ENCODE measurements at regions of chr9 and their contacts with region 1.

Region 1: DNA sequence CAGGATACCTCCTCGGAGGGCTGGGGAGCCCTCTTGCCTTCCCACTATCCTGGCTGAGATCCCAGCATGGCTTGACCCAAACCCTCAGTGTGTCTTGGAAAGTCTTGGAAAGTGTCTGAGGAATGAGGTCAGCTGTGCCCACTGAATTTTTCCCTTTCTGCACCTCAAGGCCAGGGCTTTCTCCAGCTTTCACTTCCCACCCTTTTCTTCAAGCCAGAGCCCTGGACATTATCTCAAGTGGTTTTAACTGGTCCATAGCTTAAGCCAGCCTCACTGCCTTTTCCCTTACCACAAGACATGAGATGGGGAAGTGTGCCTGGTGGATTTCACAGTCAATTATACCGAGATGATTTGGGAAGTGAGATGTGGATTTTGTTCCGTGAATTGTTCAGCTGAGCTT is 35.7 kb upstream of the LHX2 start:
- DNase-seq: no peak
- ATAC-seq: no peak
- H3K4me3 ChIP-seq: no peak overlapping the region
- H3K27ac ChIP-seq: no peak overlapping the region
- H3K4me1 ChIP-seq: no peaks in the 10 kb centered on the region
- H3K27me3 ChIP-seq: peaks cover 0 to 6% (median 3%) of the 10 kb centered on the region in 3 donors
- CTCF ChIP-seq: no peak

Region 2: DNA sequence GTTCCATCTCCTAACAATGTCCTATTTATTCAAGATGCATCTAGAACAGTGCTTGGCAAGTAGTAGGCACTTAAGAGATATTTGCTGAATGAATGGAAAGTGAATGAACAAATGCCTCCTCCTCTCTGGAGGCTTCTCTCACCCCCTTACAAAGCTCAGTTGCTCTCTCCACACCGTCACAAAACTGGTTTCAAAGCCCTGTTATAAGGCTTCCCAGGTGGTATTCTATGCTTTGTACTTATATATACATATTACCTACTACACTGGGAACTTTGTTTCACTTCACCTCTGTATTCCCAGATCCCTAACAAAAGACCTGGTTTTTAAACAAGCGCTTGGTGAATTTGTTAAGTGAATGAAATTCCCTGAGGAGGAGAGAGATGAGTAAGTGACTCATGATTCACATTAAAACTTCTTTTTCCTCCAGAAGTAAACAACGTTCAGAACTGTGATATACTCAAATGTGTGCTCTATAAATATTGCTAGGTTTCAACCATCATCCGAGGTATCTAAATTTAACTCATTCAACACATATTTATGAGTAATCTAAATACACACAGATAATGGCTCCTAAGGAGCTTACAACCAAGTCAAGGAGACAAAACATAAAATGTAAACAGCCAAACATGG is 81.9 kb before region 1 on chr9:
- intact Hi-C with region 1: no loop called
- DNase-seq: no peak
- ATAC-seq: no peak
- H3K4me3 ChIP-seq: no peak overlapping the region
- H3K27ac ChIP-seq: no peak overlapping the region
- H3K4me1 ChIP-seq: no peaks in the 10 kb centered on the region
- H3K27me3 ChIP-seq: no peaks in the 10 kb centered on the region
- CTCF ChIP-seq: no peak

Region 3: GRCh38 chr9:123988311-123989049 is 12.6 kb after region 1 on chr9:
- intact Hi-C with region 1: loop called in 1 of 2 experiments (anchors 2 kb)
- DNase-seq: no peak
- ATAC-seq: no peak
- H3K4me3 ChIP-seq: no peak overlapping the region
- H3K27ac ChIP-seq: no peak overlapping the region
- H3K4me1 ChIP-seq: no peaks in the 10 kb centered on the region
- H3K27me3 ChIP-seq: peaks cover 0 to 18% (median 2%) of the 10 kb centered on the region in 3 donors
- CTCF ChIP-seq: no peak

Region 4: DNA sequence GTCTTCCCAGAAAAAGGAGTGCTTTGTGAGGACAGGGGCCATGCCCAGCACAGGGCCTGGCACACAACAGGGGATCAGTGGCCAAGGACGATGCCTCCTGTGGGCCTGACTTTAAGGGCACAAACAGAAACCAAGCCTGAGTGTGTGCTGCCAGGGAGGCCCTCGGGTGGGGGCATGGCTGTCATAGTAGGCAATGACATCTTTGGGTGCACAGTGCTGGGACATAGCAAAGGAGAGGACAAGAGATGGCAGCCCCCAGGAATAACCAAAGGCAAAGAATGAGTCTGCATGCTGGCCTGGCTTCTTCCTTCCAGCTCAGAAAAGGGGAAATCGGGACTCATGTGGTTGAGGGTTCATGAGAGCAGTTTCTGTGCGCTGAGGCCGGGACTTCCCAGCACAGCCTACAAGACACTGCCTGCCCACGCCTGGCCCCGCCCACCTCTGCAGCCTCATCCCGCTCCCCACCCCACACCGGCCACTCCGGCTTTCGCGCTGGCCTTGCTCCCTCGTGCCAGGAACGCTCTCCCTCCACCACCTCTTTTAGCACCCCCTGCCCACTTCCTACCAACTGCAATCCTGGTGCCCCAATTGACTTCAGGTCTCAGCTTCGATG is 21.9 kb after region 1 on chr9:
- intact Hi-C with region 1: loop called in 1 of 2 experiments (anchors 2 kb)
- DNase-seq: peak in 1 of 2 donors; percentile 64
- ATAC-seq: peak in 1 of 4 donors; percentile 42
- H3K4me3 ChIP-seq: no peak overlapping the region
- H3K27ac ChIP-seq: no peak overlapping the region
- H3K4me1 ChIP-seq: no peaks in the 10 kb centered on the region
- H3K27me3 ChIP-seq: peaks cover 0 to 81% (median 35%) of the 10 kb centered on the region in 3 donors
- CTCF ChIP-seq: no peak